H1 (cell line): ENCODE measurements at regions of chr5 and their contacts with region 1.

Region 1: GRCh38 chr5:141135030-141135717 is at the start of gene PCDHB5:
- DNase-seq: peak in 1 of 2 experiments; percentile 86
- H3K4me3 ChIP-seq: peak within 1 kb of the TSS; percentile 60 to 98 (median 64)
- H3K27ac ChIP-seq: peak within 1 kb of the TSS; percentile 70
- H3K4me1 ChIP-seq: no peaks in the 10 kb centered on the region
- H3K27me3 ChIP-seq: no peaks in the 10 kb centered on the region
- CTCF ChIP-seq: peak; percentile 43 to 77 (median 72)
- EP300 ChIP-seq: no peak
- POLR2A ChIP-seq: peak in 1 of 2 experiments; percentile 49; a peak in 1 of 3 replicates
- RAD21 ChIP-seq: peak; percentile 77 to 79
- total RNA-seq, gene PCDHB5: 2.4 and 2.8 TPM in 2 replicates

Region 2: DNA sequence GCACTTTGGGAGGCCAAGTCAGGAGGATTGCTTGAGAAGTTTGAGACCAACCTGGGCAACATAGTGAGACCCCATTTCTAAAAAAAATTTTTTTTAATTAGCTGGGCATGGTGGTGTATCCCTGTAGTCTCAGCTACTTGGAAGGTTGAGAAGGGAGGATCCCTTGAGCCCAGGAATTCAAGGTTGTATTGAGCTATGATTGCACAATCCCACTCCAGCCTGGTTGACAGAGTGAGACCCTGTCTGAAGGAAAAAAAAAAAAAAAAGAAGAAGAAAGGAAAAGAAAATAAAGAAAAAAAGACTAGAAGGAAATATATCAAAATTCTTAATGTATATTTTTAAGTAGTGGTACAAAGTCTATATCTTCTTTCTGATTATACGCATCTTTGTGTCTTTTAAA is 112.8 kb before region 1 on chr5:
- CTCF ChIA-PET with region 1: no interaction called
- POLR2A ChIA-PET with region 1: no interaction called
- DNase-seq: no peak
- H3K4me3 ChIP-seq: no peak overlapping the region
- H3K27ac ChIP-seq: no peak overlapping the region
- H3K4me1 ChIP-seq: no peaks in the 10 kb centered on the region
- H3K27me3 ChIP-seq: no peaks in the 10 kb centered on the region
- CTCF ChIP-seq: no peak
- EP300 ChIP-seq: no peak
- POLR2A ChIP-seq: no peak
- RAD21 ChIP-seq: no peak

Region 3: DNA sequence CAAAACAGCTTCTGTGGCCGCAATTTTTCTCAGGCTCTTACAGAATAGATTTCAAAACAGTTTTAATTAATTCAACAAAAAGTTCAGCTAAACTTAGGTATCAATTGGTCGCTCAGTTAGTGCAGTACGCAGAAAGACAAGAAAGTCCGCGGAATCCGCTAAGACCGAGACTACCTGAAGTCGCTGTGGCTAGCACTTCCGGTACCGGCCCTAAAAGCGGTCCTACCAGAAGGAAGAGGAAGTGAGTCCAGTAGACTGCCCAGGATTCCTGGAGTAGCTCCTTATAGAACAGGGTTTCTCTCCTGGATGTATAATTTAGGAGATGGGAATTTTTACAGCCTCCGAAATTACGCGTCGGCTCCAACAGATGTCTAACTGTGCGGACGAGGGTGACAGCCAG is 57.3 kb before region 1 on chr5:
- CTCF ChIA-PET with region 1: no interaction called
- POLR2A ChIA-PET with region 1: no interaction called
- DNase-seq: no peak
- H3K4me3 ChIP-seq: no peak overlapping the region
- H3K27ac ChIP-seq: no peak overlapping the region
- H3K4me1 ChIP-seq: no peaks in the 10 kb centered on the region
- H3K27me3 ChIP-seq: no peaks in the 10 kb centered on the region
- CTCF ChIP-seq: no peak
- EP300 ChIP-seq: no peak
- POLR2A ChIP-seq: no peak
- RAD21 ChIP-seq: no peak

Region 4: GRCh38 chr5:141094481-141095262 is 40.5 kb before region 1 on chr5 and contains the start of gene PCDHB2:
- CTCF ChIA-PET with region 1: interaction called, 13 read pairs
- POLR2A ChIA-PET with region 1: interaction called, 8 read pairs
- DNase-seq: peak; percentile 75 to 84
- H3K4me3 ChIP-seq: peak within 1 kb of the TSS; percentile 80 to 99 (median 92)
- H3K27ac ChIP-seq: peak within 1 kb of the TSS; percentile 91
- H3K4me1 ChIP-seq: no peaks in the 10 kb centered on the region; a peak in 2 of 7 replicates
- H3K27me3 ChIP-seq: no peaks in the 10 kb centered on the region
- CTCF ChIP-seq: peak; percentile 56 to 85 (median 83)
- EP300 ChIP-seq: no peak
- POLR2A ChIP-seq: peak; percentile 77 to 96
- RAD21 ChIP-seq: peak; percentile 76 to 82
- total RNA-seq, gene PCDHB2: 25.6 and 28.8 TPM in 2 replicates

Region 5: GRCh38 chr5:141121563-141121962 is 13.6 kb before region 1 on chr5 and contains the start of gene PCDHB4:
- CTCF ChIA-PET with region 1: interaction called, 16 read pairs
- POLR2A ChIA-PET with region 1: interaction called, 11 read pairs
- DNase-seq: no peak
- H3K4me3 ChIP-seq: no peak within 1 kb of the TSS; a peak in 2 of 8 replicates
- H3K27ac ChIP-seq: no peak within 1 kb of the TSS
- H3K4me1 ChIP-seq: no peaks in the 10 kb centered on the region
- H3K27me3 ChIP-seq: no peaks in the 10 kb centered on the region
- CTCF ChIP-seq: peak; percentile 10 to 70 (median 63); a peak in 3 of 4 replicates
- EP300 ChIP-seq: no peak
- POLR2A ChIP-seq: no peak
- RAD21 ChIP-seq: peak; percentile 77 to 78
- total RNA-seq, gene PCDHB4: 1.4 and 1.5 TPM in 2 replicates

Region 6: DNA sequence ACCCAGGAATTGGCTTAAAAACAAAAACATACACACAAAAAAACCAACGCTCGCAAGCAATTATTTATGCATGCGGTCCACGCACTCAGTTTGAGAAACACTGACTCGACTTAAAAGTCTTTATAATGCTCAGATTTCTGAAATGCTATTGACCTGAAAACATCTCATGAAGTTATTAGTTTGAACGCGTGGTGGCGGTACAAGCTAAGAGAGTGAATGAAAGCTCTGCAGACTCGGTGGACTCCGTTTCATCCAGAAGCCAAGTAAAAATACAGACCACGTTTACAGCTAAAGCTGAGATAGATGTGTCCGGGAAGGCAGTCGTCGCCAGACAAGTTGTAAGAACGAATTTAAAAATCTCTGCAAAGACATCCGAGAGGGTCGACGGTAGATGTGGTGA is 14.6 kb after region 1 on chr5 and contains the start of gene PCDHB6:
- CTCF ChIA-PET with region 1: interaction called, 29 read pairs
- POLR2A ChIA-PET with region 1: interaction called, 4 read pairs
- DNase-seq: peak in 1 of 2 experiments; percentile 60
- H3K4me3 ChIP-seq: no peak within 1 kb of the TSS
- H3K27ac ChIP-seq: no peak within 1 kb of the TSS
- H3K4me1 ChIP-seq: no peaks in the 10 kb centered on the region
- H3K27me3 ChIP-seq: no peaks in the 10 kb centered on the region
- CTCF ChIP-seq: peak in 2 of 3 experiments; percentile 39 to 44; a peak in 2 of 4 replicates
- EP300 ChIP-seq: no peak
- POLR2A ChIP-seq: no peak
- RAD21 ChIP-seq: peak; percentile 37 to 46; a peak in 3 of 4 replicates
- total RNA-seq, gene PCDHB6: 0.17 and 0.28 TPM in 2 replicates

Region 7: GRCh38 chr5:141155540-141156374 is 20.6 kb after region 1 on chr5:
- CTCF ChIA-PET with region 1: interaction called, 29 read pairs
- POLR2A ChIA-PET with region 1: interaction called, 4 read pairs
- DNase-seq: peak in 1 of 2 experiments; percentile 67
- H3K4me3 ChIP-seq: no peak overlapping the region
- H3K27ac ChIP-seq: no peak overlapping the region
- H3K4me1 ChIP-seq: no peaks in the 10 kb centered on the region
- H3K27me3 ChIP-seq: no peaks in the 10 kb centered on the region
- CTCF ChIP-seq: peak in 2 of 3 experiments; percentile 70 to 72; a peak in 3 of 4 replicates
- EP300 ChIP-seq: no peak
- POLR2A ChIP-seq: no peak
- RAD21 ChIP-seq: peak; percentile 58 to 69

Region 8: GRCh38 chr5:141192110-141192732 is 57.0 kb after region 1 on chr5 and contains the start of gene PCDHB10:
- CTCF ChIA-PET with region 1: interaction called, 21 read pairs
- POLR2A ChIA-PET with region 1: interaction called, 5 read pairs
- DNase-seq: peak in 1 of 2 experiments; percentile 92
- H3K4me3 ChIP-seq: peak within 1 kb of the TSS; percentile 14 to 46 (median 35); a peak in 6 of 8 replicates
- H3K27ac ChIP-seq: no peak within 1 kb of the TSS
- H3K4me1 ChIP-seq: no peaks in the 10 kb centered on the region; a peak in 1 of 7 replicates
- H3K27me3 ChIP-seq: no peaks in the 10 kb centered on the region
- CTCF ChIP-seq: peak; percentile 72 to 83 (median 83)
- EP300 ChIP-seq: no peak
- POLR2A ChIP-seq: no peak
- RAD21 ChIP-seq: peak; percentile 82 to 84
- total RNA-seq, gene PCDHB10: 1.8 and 1.9 TPM in 2 replicates

Region 9: DNA sequence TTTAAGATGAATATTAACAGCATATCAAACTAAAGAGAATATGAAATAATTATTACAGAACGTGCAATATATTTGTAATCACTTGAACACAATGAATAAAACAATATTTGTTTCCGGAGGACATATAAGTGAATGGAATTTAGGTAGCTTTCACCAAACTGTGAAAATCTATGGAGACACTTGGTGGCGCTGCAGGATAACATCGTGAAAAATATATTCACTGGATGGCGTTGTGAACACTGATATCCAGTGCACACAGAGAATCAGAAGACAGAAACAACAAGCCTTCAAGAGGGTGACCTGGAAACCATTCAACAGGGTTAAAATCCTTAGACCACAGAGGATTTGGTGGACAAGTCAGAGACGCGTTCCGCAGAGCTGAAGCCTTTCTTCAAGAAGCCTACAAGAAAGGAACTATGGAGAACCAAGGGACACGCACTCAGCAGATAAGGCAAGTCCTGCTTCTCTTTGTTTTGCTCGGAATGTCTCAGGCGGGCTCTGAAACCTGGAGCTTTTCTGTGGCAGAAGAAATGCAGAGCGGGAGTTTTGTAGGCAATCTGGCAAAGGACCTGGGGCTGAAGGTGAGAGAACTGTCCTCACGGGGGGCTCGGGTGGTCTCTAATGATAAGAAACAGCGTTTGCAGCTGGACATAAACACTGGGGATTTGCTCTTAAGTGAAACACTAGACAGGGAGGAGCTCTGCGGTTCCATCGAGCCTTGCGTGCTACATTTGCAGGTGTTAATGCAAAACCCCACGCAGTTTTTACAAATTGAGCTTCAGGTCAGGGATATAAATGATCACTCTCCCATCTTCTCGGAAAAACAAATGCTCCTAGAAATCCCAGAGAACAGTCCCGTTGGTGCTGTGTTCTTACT is 64.4 kb after region 1 on chr5 and contains the start of gene PCDHB11:
- CTCF ChIA-PET with region 1: interaction called, 10 read pairs
- POLR2A ChIA-PET with region 1: no interaction called
- DNase-seq: no peak
- H3K4me3 ChIP-seq: peak within 1 kb of the TSS in 1 of 4 experiments; percentile 25; a peak in 2 of 8 replicates
- H3K27ac ChIP-seq: no peak within 1 kb of the TSS
- H3K4me1 ChIP-seq: no peaks in the 10 kb centered on the region
- H3K27me3 ChIP-seq: no peaks in the 10 kb centered on the region
- CTCF ChIP-seq: peak in 2 of 3 experiments; percentile 55 to 66; a peak in 3 of 4 replicates
- EP300 ChIP-seq: no peak
- POLR2A ChIP-seq: no peak
- RAD21 ChIP-seq: peak; percentile 68 to 73
- total RNA-seq, gene PCDHB11: 0.86 and 1.4 TPM in 2 replicates